SK-N-SH (cell line): ENCODE measurements at regions of chr1 and their contacts with region 1.

Region 1: DNA sequence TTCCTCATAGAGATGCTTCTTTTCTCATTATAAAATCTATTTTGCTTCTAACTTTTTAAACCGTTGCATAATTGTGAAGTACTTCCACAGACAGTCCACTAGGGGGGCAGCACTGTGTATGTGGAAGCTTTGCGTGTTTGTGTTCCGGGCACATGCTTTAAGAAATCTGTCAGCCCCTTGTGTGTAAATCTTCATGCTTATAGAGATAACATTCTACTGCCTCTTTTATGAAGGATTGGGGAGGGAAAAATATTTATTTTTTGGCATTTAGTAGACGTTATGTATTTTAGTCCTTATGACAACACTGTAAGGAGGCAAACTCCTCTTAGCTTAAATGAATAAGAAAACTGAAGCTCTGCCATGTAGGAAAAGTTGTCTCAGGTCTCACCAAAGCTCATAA is 157.3 kb upstream of the PTGFR start:
- DNase-seq: no peak
- H3K4me3 ChIP-seq: no peak overlapping the region
- H3K27ac ChIP-seq: no peak overlapping the region
- H3K4me1 ChIP-seq: no peaks in the 10 kb centered on the region
- H3K27me3 ChIP-seq: no peaks in the 10 kb centered on the region
- CTCF ChIP-seq: peak; percentile 77
- EP300 ChIP-seq: no peak
- RAD21 ChIP-seq: peak; percentile 51

Region 2: DNA sequence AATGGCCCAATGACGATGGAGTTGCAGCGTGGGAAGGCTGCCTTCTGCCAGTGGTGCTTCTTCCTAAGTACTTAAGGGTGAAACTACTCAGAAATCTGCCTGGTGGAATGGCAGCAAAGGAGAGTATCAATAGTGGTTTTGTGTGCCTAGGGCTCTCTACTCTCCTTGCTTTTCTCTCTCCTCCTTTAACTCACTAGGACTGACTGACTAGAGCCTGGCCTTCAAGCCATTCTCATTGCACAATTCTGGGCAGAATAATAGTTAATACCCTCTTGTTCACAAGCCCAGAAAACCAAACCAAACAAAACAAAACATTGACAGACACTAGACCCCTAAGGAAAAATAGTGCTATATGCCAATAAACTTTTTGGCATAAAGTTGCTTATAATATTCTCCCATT is 13.9 kb before region 1 on chr1:
- CTCF ChIA-PET with region 1: interaction called, 13 read pairs
- POLR2A ChIA-PET with region 1: no interaction called
- DNase-seq: no peak
- H3K4me3 ChIP-seq: no peak overlapping the region
- H3K27ac ChIP-seq: no peak overlapping the region
- H3K4me1 ChIP-seq: no peaks in the 10 kb centered on the region
- H3K27me3 ChIP-seq: no peaks in the 10 kb centered on the region
- CTCF ChIP-seq: no peak
- EP300 ChIP-seq: no peak
- RAD21 ChIP-seq: no peak

Region 3: GRCh38 chr1:78351551-78352216 is 18.2 kb after region 1 on chr1:
- CTCF ChIA-PET with region 1: interaction called, 11 read pairs
- POLR2A ChIA-PET with region 1: no interaction called
- DNase-seq: peak; percentile 3
- H3K4me3 ChIP-seq: no peak overlapping the region
- H3K27ac ChIP-seq: no peak overlapping the region
- H3K4me1 ChIP-seq: no peaks in the 10 kb centered on the region; a peak in 2 of 4 replicates
- H3K27me3 ChIP-seq: no peaks in the 10 kb centered on the region
- CTCF ChIP-seq: no peak
- EP300 ChIP-seq: no peak; a peak in 1 of 4 replicates
- RAD21 ChIP-seq: no peak